ENCODE measurements at regions of chr6 and their contacts with region 1.

Region 1: GRCh38 chr6:38702558-38703397 is at the start of gene GLO1:
- DNase-seq: peak; percentile 96 to 97
- H3K4me3 ChIP-seq: peak within 1 kb of the TSS; percentile 83
- H3K27ac ChIP-seq: peak within 1 kb of the TSS; percentile 82
- H3K4me1 ChIP-seq: no peaks in the 10 kb centered on the region
- H3K27me3 ChIP-seq: no peaks in the 10 kb centered on the region
- CTCF ChIP-seq: no peak
- total RNA-seq, gene GLO1: 77.1 and 118 TPM in 2 replicates

Region 2: GRCh38 chr6:37353761-37354525 is 1348.8 kb before region 1 on chr6 and contains the start of gene RNF8:
- CTCF ChIA-PET with region 1: no interaction called
- POLR2A ChIA-PET with region 1: no interaction called
- intact Hi-C with region 1: no loop called
- DNase-seq: peak; percentile 66 to 89
- H3K4me3 ChIP-seq: peak within 1 kb of the TSS; percentile 66
- H3K27ac ChIP-seq: no peak within 1 kb of the TSS
- H3K4me1 ChIP-seq: peaks cover 9% of the 10 kb centered on the region
- H3K27me3 ChIP-seq: no peaks in the 10 kb centered on the region
- CTCF ChIP-seq: no peak
- total RNA-seq, gene RNF8: 17.5 and 18.7 TPM in 2 replicates

Region 3: DNA sequence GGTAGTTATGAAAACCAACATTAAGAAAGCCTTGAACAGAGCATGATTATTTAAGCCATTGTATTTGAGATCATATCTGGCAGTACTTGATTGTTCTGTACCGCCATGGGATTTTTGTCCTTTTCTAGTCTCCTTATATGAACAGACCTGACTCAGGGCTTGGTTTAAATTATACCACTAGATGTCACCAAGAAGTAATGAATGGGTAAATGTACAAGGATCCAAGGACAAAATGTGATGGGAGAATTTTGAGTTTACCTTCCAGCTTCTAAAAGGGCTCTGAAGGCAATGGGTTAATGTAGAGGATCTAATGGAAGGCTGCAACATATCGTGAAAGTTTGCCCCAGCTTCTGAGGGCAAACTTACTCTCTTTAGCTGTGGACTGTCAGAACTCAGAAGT is 1337.0 kb before region 1 on chr6:
- CTCF ChIA-PET with region 1: no interaction called
- POLR2A ChIA-PET with region 1: interaction called, 14 read pairs
- intact Hi-C with region 1: no loop called
- DNase-seq: no peak
- H3K4me3 ChIP-seq: no peak overlapping the region
- H3K27ac ChIP-seq: no peak overlapping the region
- H3K4me1 ChIP-seq: no peaks in the 10 kb centered on the region
- H3K27me3 ChIP-seq: no peaks in the 10 kb centered on the region
- CTCF ChIP-seq: no peak; the same call in 1 of the 2 replicates

Region 4: GRCh38 chr6:37819177-37819823 is 883.5 kb before region 1 on chr6 and contains the start of gene ZFAND3:
- CTCF ChIA-PET with region 1: no interaction called
- POLR2A ChIA-PET with region 1: interaction called, 25 read pairs
- intact Hi-C with region 1: no loop called
- DNase-seq: peak; percentile 81 to 97
- H3K4me3 ChIP-seq: peak within 1 kb of the TSS; percentile 94
- H3K27ac ChIP-seq: peak within 1 kb of the TSS; percentile 66
- H3K4me1 ChIP-seq: peaks cover 24% of the 10 kb centered on the region
- H3K27me3 ChIP-seq: no peaks in the 10 kb centered on the region
- CTCF ChIP-seq: no peak
- total RNA-seq, gene ZFAND3: 37.9 and 46.8 TPM in 2 replicates

Region 5: DNA sequence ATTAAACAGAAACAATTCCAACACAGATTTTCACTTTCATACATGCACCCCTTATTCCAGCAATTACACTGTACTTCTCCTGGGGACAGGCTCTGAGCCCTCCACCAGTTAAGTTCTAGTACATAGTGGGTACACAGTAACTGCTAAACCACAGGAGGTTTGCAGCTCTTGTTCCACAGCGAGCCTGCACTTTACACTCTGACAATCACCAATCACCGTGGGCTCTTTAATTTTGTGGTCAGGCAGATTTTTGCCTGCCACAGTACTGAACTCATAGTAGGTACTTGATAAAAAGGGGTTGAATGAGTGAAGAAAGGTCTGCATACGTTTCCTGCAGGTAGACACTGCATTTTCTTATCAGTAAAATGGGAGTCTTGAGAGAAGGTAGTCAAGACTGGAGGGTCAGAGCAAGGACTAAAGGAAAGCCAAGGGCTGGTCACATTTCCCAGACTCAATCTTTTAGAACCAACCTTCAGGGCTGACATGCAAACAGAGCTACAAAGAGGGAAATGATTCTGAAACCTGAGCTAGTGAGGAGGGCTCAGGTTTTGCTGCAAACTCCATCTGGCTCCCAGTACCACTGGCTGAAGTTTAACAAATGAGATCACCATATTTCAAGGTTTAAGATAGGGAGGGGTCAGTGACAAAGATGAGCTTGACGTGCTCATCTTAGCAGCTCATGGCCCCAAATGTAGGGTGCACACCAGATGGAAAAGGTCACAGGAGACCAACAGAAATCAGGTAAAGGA is 467.7 kb before region 1 on chr6:
- CTCF ChIA-PET with region 1: no interaction called
- POLR2A ChIA-PET with region 1: interaction called, 20 read pairs
- intact Hi-C with region 1: no loop called
- DNase-seq: no peak
- H3K4me3 ChIP-seq: no peak overlapping the region
- H3K27ac ChIP-seq: no peak overlapping the region
- H3K4me1 ChIP-seq: peaks cover 33% of the 10 kb centered on the region
- H3K27me3 ChIP-seq: no peaks in the 10 kb centered on the region
- CTCF ChIP-seq: no peak

Region 6: DNA sequence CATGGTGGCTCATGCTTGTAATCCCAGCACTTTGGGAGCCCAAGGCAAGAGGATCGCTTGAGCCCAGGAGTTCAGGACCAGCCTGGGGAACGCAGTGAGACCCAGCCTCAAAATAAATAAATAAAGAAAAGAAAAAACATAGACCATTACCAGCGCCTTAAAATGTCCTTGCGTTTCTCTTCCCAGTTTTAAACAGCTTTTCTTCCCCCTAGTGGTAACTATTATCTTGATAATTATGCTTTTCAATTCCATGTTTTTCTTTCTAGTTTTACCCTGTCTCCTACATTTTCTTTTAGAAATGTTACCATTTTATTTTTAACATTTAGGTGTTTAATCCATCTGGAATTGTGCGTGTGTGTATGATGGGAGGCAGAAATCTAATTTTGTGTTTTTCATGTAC is 36.8 kb after region 1 on chr6:
- CTCF ChIA-PET with region 1: no interaction called
- POLR2A ChIA-PET with region 1: interaction called, 19 read pairs
- intact Hi-C with region 1: no loop called
- DNase-seq: no peak
- H3K4me3 ChIP-seq: no peak overlapping the region
- H3K27ac ChIP-seq: no peak overlapping the region
- H3K4me1 ChIP-seq: no peaks in the 10 kb centered on the region
- H3K27me3 ChIP-seq: no peaks in the 10 kb centered on the region
- CTCF ChIP-seq: no peak; the same call in 1 of the 2 replicates

Region 7: DNA sequence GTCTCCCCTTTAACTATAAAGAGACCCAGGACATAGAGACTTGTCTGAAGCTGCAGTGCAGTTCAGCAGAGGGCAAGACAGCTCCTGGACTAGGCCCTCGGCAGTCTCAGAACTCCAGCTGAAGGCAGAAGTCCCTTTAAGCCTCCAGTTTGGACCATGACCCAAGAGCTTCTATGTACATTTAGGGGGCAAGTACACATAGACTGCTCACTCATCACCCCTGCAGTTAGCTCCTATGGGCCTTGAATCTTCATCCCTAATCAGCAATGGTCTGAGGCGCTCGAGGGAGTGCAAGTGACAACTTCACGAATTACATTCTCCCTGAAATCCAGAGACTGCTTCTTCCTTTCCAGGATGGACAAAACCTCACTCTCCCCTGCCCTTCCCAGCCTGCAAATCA is 479.0 kb after region 1 on chr6:
- CTCF ChIA-PET with region 1: interaction called, 13 read pairs
- POLR2A ChIA-PET with region 1: no interaction called
- intact Hi-C with region 1: no loop called
- DNase-seq: no peak
- H3K4me3 ChIP-seq: no peak overlapping the region
- H3K27ac ChIP-seq: no peak overlapping the region
- H3K4me1 ChIP-seq: peaks cover 38% of the 10 kb centered on the region
- H3K27me3 ChIP-seq: no peaks in the 10 kb centered on the region
- CTCF ChIP-seq: no peak

Measured in PC-9 (cell line).